ENCODE measurements at regions of chr11 and their contacts with region 1.

Region 1: DNA sequence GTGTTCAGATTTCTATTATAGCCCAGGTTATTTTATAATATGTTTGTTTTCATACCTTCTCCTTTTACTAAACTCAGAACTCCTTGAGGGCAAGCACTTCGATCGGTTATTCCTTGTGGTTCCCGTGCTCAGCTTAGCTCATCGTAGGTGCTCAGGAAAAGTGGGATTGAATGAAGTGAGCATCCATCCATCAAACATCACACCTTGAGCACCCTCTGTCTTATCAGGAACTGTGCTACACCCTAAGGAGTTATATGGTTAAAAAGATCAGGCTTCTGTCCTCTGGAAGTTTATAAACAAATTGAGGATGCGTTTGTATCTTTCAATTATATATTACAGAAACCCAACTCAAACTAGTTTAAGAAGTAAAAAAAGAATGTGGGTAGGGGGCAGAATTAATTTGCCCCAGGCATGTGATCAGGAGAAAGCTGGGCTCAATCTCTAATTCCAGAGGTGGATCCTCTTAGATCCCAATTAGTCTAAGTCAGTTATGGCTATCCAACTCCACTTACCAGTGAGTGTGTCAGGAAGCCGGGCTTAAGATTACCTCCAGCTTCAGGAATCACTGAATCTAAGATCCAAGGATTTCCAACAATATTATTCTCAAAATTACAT is 59.9 kb upstream of the RRAS2 start:
- DNase-seq: no peak
- ATAC-seq: no peak
- H3K4me3 Mint-ChIP-seq: no peak overlapping the region
- H3K27ac Mint-ChIP-seq: no peak overlapping the region
- H3K4me1 Mint-ChIP-seq: peaks cover 40% of the 10 kb centered on the region
- H3K27me3 Mint-ChIP-seq: no peaks in the 10 kb centered on the region

Region 2: GRCh38 chr11:14435717-14436512 is 17.0 kb after region 1 on chr11:
- CTCF ChIA-PET with region 1: interaction called, 10 read pairs
- DNase-seq: peak; percentile 59
- ATAC-seq: peak; percentile 76
- H3K4me3 Mint-ChIP-seq: no peak overlapping the region
- H3K27ac Mint-ChIP-seq: peak overlapping the region; percentile 13
- H3K4me1 Mint-ChIP-seq: peaks cover 33% of the 10 kb centered on the region
- H3K27me3 Mint-ChIP-seq: no peaks in the 10 kb centered on the region